ENCODE measurements at regions of chr11 and their contacts with region 1.

Region 1: GRCh38 chr11:124793466-124794278 is 6.5 kb downstream of the MSANTD2 start:
- DNase-seq: peak; percentile 40
- H3K4me3 Mint-ChIP-seq: no peak overlapping the region
- H3K27ac Mint-ChIP-seq: no peak overlapping the region
- H3K4me1 Mint-ChIP-seq: peaks cover 38% of the 10 kb centered on the region
- H3K27me3 Mint-ChIP-seq: no peaks in the 10 kb centered on the region

Region 2: DNA sequence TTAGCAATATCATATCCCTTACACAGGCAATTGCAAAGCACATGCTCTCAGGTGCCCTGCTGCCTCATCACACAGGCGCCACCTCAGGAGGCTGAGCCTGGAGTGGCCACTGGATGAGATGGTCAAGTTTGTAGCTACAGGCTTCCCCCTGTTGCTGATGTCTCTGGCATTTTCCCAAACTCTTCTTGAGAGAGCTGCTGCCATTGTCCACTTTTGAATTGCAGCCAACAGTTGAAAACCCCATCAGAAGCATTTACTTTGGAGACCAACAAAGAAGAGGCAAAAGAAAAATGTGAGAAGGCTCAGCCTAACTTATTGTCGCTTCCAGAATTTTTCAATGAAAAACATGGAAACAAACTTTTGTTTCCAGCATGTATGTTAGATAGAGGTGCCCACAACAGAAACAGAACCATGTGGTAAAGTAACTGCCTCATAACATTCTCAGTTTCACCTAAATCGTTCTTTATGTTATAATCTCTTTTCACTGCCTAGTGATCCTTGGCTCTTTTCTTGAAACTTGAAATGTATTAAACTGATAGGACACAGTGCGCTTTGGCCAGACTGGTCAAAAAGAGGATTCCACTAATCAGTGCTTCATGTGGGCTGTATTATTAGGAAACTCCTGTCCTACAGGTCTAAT is 300.5 kb before region 1 on chr11:
- CTCF ChIA-PET with region 1: no interaction called
- DNase-seq: no peak
- H3K4me3 Mint-ChIP-seq: no peak overlapping the region
- H3K27ac Mint-ChIP-seq: no peak overlapping the region
- H3K4me1 Mint-ChIP-seq: no peaks in the 10 kb centered on the region
- H3K27me3 Mint-ChIP-seq: no peaks in the 10 kb centered on the region

Region 3: GRCh38 chr11:124644426-124645280 is 149.0 kb before region 1 on chr11:
- CTCF ChIA-PET with region 1: interaction called, 18 read pairs
- DNase-seq: peak; percentile 33
- H3K4me3 Mint-ChIP-seq: no peak overlapping the region
- H3K27ac Mint-ChIP-seq: no peak overlapping the region
- H3K4me1 Mint-ChIP-seq: no peaks in the 10 kb centered on the region
- H3K27me3 Mint-ChIP-seq: no peaks in the 10 kb centered on the region

Region 4: DNA sequence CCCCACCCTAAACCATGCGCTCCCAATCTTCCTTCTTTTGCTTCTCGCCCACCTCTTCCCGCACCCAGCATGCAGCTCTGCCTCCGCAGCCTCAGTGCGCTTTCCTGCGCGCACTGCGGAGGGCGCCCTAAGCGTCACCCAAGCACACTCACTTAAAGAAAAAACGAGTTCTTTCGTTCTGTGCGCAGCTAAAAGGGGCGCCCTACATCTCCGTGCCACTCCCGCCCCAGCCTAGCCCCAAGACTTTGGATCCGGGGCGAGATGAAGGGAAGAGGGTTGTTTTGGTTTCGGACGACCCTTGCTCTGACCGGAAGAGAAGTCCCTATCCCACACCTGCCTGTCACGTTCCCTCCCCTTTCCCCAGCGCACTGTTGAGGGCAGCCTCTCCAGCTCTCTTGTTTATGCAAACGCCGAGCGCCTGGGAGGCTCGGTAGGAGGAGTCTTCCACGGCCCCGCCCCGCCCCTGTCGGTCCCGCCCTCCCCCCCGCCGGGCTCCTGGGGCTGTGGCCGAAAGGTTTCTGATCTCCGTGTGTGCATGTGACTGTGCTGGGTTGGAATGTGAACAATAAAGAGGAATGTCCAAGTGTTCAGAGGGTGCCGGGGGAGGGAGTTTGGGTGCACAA is 46.9 kb before region 1 on chr11:
- CTCF ChIA-PET with region 1: interaction called, 11 read pairs
- DNase-seq: peak; percentile 86
- H3K4me3 Mint-ChIP-seq: peak overlapping the region; percentile 84
- H3K27ac Mint-ChIP-seq: peak overlapping the region; percentile 86
- H3K4me1 Mint-ChIP-seq: peaks cover 47% of the 10 kb centered on the region
- H3K27me3 Mint-ChIP-seq: peaks cover 55% of the 10 kb centered on the region

Region 5: GRCh38 chr11:124758317-124759203 is 35.1 kb before region 1 on chr11:
- CTCF ChIA-PET with region 1: interaction called, 39 read pairs
- DNase-seq: peak; percentile 80
- H3K4me3 Mint-ChIP-seq: no peak overlapping the region
- H3K27ac Mint-ChIP-seq: no peak overlapping the region
- H3K4me1 Mint-ChIP-seq: peaks cover 41% of the 10 kb centered on the region
- H3K27me3 Mint-ChIP-seq: peaks cover 77% of the 10 kb centered on the region

Region 6: DNA sequence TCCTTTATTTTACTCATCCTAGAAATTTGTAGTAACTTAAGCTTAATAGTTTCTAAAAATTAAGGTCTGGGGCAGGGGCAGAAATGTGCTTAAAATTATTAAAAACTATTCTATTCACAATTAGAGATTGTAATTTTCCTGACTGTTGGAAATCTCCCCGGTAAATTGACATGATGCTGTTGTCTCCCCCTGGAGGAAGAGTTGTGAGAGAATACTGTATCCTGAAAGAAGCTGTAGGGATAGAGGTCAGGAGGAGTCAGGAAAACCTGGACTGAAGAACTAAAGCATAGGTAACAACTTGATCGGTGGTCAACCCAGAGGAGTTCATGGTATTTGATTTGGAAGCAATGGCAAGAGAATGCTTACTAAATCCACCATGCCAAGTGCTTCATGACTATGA is 15.4 kb before region 1 on chr11:
- CTCF ChIA-PET with region 1: interaction called, 15 read pairs
- DNase-seq: no peak
- H3K4me3 Mint-ChIP-seq: no peak overlapping the region
- H3K27ac Mint-ChIP-seq: no peak overlapping the region
- H3K4me1 Mint-ChIP-seq: peaks cover 19% of the 10 kb centered on the region
- H3K27me3 Mint-ChIP-seq: no peaks in the 10 kb centered on the region

Region 7: DNA sequence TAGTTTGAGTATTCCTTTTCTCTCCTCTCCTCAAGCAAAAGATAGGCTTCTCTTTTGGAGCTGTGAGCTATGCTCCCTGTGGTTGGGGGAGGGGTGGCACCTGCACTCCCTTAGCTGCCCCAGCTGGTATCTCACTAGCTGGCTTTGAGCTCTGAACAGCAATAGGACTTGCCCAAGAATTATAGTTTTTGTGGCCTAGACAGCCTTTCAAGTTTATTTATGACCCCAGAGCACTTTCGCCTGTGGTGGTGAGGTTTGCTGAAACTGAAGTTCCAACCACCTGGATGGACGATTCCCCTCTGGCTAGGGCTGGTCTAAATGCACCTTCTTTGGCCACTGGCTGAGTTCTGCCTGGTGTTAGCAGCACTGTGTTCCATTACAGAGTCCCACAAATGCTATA is 232.3 kb after region 1 on chr11:
- CTCF ChIA-PET with region 1: no interaction called
- DNase-seq: no peak
- H3K4me3 Mint-ChIP-seq: no peak overlapping the region
- H3K27ac Mint-ChIP-seq: no peak overlapping the region
- H3K4me1 Mint-ChIP-seq: no peaks in the 10 kb centered on the region
- H3K27me3 Mint-ChIP-seq: no peaks in the 10 kb centered on the region